T-cell (primary cell): ENCODE measurements at regions of chr1 and their contacts with region 1.

Region 1: GRCh38 chr1:231866392-231867331 is 240.1 kb downstream of the DISC1 start:
- DNase-seq: peak in 34 of 35 experiments; percentile 18 to 82 (median 46)
- ATAC-seq: peak in 2 of 4 experiments; percentile 20 to 35
- H3K4me3 ChIP-seq: no peak overlapping the region
- H3K4me3 Mint-ChIP-seq: no peak overlapping the region
- H3K27ac ChIP-seq: no peak overlapping the region
- H3K27ac Mint-ChIP-seq: no peak overlapping the region
- H3K4me1 ChIP-seq: peaks cover 17 to 26% of the 10 kb centered on the region in 2 experiments
- H3K4me1 Mint-ChIP-seq: peaks cover 40 to 46% (median 46%) of the 10 kb centered on the region in 3 donors
- H3K27me3 ChIP-seq: no peaks in the 10 kb centered on the region
- H3K27me3 Mint-ChIP-seq: no peaks in the 10 kb centered on the region

Region 2: DNA sequence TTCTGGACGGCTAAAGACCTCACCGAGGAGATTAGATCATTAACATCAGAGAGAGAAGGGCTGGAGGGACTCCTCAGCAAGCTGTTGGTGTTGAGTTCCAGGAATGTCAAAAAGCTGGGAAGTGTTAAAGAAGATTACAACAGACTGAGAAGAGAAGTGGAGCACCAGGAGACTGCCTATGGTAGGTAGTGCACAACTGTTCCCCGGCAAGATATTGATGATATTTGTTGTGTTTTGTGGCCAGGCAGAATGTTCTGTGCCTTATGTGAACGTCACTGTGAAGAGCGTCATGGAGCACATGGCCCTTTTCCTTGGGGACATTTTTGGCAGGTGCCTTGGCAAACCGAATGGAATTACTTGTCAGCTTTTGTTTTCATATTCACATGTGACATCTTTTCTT is 48.3 kb before region 1 on chr1:
- CTCF ChIA-PET with region 1: no interaction called
- POLR2A ChIA-PET with region 1: no interaction called
- DNase-seq: no peak
- ATAC-seq: no peak
- H3K4me3 ChIP-seq: no peak overlapping the region
- H3K4me3 Mint-ChIP-seq: no peak overlapping the region
- H3K27ac ChIP-seq: no peak overlapping the region
- H3K27ac Mint-ChIP-seq: no peak overlapping the region
- H3K4me1 ChIP-seq: no peaks in the 10 kb centered on the region
- H3K4me1 Mint-ChIP-seq: peaks cover 0 to 7% (median 0%) of the 10 kb centered on the region in 3 donors
- H3K27me3 ChIP-seq: no peaks in the 10 kb centered on the region
- H3K27me3 Mint-ChIP-seq: no peaks in the 10 kb centered on the region

Region 3: DNA sequence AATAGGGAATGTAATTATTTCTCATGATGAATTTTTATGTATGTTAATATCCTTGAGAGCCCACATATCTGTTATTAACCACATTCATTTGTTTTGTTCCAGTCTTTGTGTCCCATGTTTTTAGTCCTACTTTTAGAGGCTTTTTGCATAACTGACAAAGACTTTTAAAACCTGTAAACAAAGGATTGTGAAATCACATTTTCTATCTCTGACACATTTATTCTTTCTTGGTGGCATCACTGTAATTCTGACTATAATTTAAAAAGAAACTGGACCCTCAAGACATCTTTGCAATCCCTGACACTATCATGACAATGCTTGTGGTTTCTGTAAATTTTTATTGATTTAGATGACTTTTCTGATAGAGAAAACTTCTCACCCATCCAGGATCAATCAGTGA is 450.2 kb after region 1 on chr1:
- CTCF ChIA-PET with region 1: no interaction called
- POLR2A ChIA-PET with region 1: interaction called in 1 of 2 experiments, 11 read pairs
- DNase-seq: no peak
- ATAC-seq: no peak
- H3K4me3 ChIP-seq: no peak overlapping the region
- H3K4me3 Mint-ChIP-seq: no peak overlapping the region
- H3K27ac ChIP-seq: no peak overlapping the region
- H3K27ac Mint-ChIP-seq: no peak overlapping the region
- H3K4me1 ChIP-seq: no peaks in the 10 kb centered on the region
- H3K4me1 Mint-ChIP-seq: no peaks in the 10 kb centered on the region
- H3K27me3 ChIP-seq: no peaks in the 10 kb centered on the region
- H3K27me3 Mint-ChIP-seq: peaks cover 0 to 2% of the 10 kb centered on the region in 2 donors

Region 4: GRCh38 chr1:232627645-232628334 is 761.1 kb after region 1 on chr1:
- CTCF ChIA-PET with region 1: interaction called, 5 to 27 read pairs
- POLR2A ChIA-PET with region 1: no interaction called
- DNase-seq: peak in 14 of 35 experiments; percentile 5 to 74 (median 27)
- ATAC-seq: peak in 3 of 4 experiments; percentile 25 to 62 (median 38)
- H3K4me3 ChIP-seq: no peak overlapping the region
- H3K4me3 Mint-ChIP-seq: peak overlapping the region; percentile 22 to 89 (median 80)
- H3K27ac ChIP-seq: no peak overlapping the region
- H3K27ac Mint-ChIP-seq: no peak overlapping the region
- H3K4me1 ChIP-seq: peaks cover 8 to 19% of the 10 kb centered on the region in 2 experiments
- H3K4me1 Mint-ChIP-seq: peaks cover 21 to 28% (median 28%) of the 10 kb centered on the region in 3 donors
- H3K27me3 ChIP-seq: peaks cover 0 to 17% of the 10 kb centered on the region in 2 experiments
- H3K27me3 Mint-ChIP-seq: peaks cover 18 to 23% of the 10 kb centered on the region in 2 donors